ENCODE measurements at regions of chr7 and their contacts with region 1.

Region 1: DNA sequence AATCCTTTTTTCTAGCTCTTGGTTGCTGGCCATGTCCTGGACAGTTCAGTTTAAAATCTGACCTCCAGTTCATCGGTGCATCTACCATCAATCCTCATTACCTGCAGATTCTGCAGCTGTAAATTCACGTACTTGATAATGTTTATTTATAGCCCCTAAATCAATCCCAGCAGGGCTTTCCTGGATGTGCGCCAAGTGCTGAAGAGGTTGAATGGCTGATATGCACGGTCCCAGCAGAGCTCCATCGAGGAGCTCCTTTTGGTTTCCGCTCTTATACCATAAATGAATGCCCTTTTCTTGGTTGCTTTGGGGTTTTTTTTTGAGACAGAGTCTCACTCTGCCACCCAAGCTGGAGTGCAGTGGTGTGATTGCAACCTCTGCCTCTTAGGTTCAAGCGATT is 91.2 kb upstream of the CCZ1B start:
- DNase-seq: no peak
- H3K4me3 ChIP-seq: no peak overlapping the region
- H3K27ac ChIP-seq: no peak overlapping the region
- H3K4me1 ChIP-seq: no peaks in the 10 kb centered on the region
- H3K27me3 ChIP-seq: no peaks in the 10 kb centered on the region; the same call in 1 of the 2 replicates

Region 2: GRCh38 chr7:5997222-5997808 is 919.9 kb before region 1 on chr7:
- in situ Hi-C with region 1: loop called (anchors 25 kb)
- DNase-seq: peak; percentile 82
- H3K4me3 ChIP-seq: no peak overlapping the region
- H3K27ac ChIP-seq: no peak overlapping the region
- H3K4me1 ChIP-seq: no peaks in the 10 kb centered on the region
- H3K27me3 ChIP-seq: no peaks in the 10 kb centered on the region

Region 3: DNA sequence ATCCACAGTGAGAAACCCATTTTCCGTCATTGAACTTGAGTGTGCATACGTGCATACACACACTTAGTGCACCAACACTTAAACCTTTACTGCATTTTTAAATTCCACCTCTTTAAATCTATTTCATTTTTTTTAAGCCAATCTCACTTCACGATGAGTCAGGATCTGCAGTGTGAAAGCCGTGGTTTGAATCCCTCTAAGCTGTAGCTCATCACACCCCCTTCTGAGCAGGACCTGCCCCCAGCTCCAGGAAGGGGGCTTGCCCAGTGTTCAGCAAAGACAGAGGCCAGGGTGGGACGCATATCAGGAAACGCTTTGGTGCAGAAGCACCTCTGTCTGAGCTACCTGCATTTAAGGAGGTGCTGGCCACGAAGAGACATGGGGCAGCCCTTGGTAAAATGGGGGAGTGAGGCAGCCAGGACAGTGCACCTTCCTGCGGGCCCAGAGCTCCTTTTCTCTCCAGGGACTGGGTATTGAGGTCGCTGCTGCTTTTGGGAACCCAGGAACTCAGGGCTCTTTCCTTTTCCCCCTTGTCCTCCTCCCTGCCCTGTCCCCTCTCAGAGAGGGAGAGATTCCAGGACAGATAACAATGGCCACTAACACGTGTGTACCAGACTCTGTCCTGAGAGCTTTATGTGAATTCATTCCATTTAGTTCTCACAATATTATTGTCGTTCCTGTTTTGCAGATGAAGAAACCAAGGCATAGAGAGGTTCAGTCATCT is 258.5 kb before region 1 on chr7:
- in situ Hi-C with region 1: no loop called
- DNase-seq: peak; percentile 38
- H3K4me3 ChIP-seq: no peak overlapping the region
- H3K27ac ChIP-seq: no peak overlapping the region
- H3K4me1 ChIP-seq: no peaks in the 10 kb centered on the region
- H3K27me3 ChIP-seq: no peaks in the 10 kb centered on the region